ENCODE measurements at regions of chr5 and their contacts with region 1.

Region 1: GRCh38 chr5:139517683-139518564 is 35.4 kb upstream of the STING1 start:
- DNase-seq: peak; percentile 79 to 93 (median 86)
- H3K4me3 ChIP-seq: peak overlapping the region; percentile 65 to 84
- H3K4me3 Mint-ChIP-seq: peak overlapping the region; percentile 76 to 96 (median 90)
- H3K27ac ChIP-seq: peak overlapping the region; percentile 78
- H3K27ac Mint-ChIP-seq: peak overlapping the region; percentile 80 to 99 (median 98)
- H3K4me1 ChIP-seq: peaks cover 13% of the 10 kb centered on the region
- H3K4me1 Mint-ChIP-seq: peaks cover 16 to 32% (median 23%) of the 10 kb centered on the region in 4 donors
- H3K27me3 ChIP-seq: no peaks in the 10 kb centered on the region
- H3K27me3 Mint-ChIP-seq: peaks cover 1 to 4% of the 10 kb centered on the region in 2 donors

Region 2: GRCh38 chr5:137545956-137546355 is 1972.0 kb before region 1 on chr5:
- CTCF ChIA-PET with region 1: no interaction called
- POLR2A ChIA-PET with region 1: no interaction called
- intact Hi-C with region 1: no loop called
- DNase-seq: no peak
- H3K4me3 ChIP-seq: no peak overlapping the region
- H3K4me3 Mint-ChIP-seq: no peak overlapping the region
- H3K27ac ChIP-seq: no peak overlapping the region
- H3K27ac Mint-ChIP-seq: no peak overlapping the region
- H3K4me1 ChIP-seq: no peaks in the 10 kb centered on the region
- H3K4me1 Mint-ChIP-seq: no peaks in the 10 kb centered on the region
- H3K27me3 ChIP-seq: no peaks in the 10 kb centered on the region
- H3K27me3 Mint-ChIP-seq: peaks cover 21 to 26% of the 10 kb centered on the region in 2 donors

Region 3: DNA sequence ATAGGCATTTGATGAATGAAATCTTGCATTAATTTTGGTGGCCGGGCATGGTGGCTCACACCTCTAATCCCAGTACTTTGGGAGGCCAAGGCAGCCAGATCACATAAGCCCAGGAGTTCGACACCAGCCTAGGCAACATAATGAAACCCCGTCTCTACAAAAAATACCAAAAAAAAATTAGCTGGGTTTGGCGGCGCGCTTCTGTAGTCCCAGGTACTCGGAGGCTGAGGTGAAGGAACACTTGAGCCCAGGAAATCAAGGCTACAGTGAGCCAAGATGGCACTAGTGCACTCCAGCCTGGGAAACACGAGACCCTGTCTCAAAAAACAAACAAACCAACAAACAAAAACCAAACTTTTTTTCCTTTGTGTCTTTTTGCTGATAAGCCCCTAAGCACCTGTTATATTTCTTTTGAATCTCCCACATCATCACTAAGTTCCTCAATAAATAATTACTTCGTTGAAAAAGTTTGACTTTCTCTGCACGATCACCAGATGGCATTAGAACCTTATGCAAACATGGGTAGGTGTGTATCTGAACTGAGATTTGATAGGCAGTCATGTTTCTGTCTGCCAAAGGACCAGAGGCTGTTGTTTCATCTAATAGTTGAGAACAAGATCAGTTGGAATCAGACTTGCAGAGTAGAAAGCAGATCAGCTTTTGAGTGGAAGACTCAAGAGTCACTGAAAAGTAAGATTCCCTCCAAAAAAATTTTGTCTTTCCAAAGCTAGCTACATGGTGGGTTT is 229.9 kb before region 1 on chr5:
- CTCF ChIA-PET with region 1: interaction called, 3 read pairs
- POLR2A ChIA-PET with region 1: no interaction called
- intact Hi-C with region 1: loop called (anchors 5 kb)
- DNase-seq: no peak
- H3K4me3 ChIP-seq: no peak overlapping the region
- H3K4me3 Mint-ChIP-seq: no peak overlapping the region
- H3K27ac ChIP-seq: no peak overlapping the region
- H3K27ac Mint-ChIP-seq: peak overlapping the region in 1 of 7 donors; percentile 30
- H3K4me1 ChIP-seq: peaks cover 6% of the 10 kb centered on the region
- H3K4me1 Mint-ChIP-seq: peaks cover under 1 to 3% (median 3%) of the 10 kb centered on the region in 4 donors
- H3K27me3 ChIP-seq: no peaks in the 10 kb centered on the region
- H3K27me3 Mint-ChIP-seq: no peaks in the 10 kb centered on the region

Region 4: GRCh38 chr5:139430015-139430414 is 87.9 kb before region 1 on chr5:
- CTCF ChIA-PET with region 1: interaction called, 632 read pairs
- POLR2A ChIA-PET with region 1: interaction called, 103 read pairs
- intact Hi-C with region 1: no loop called
- DNase-seq: no peak
- H3K4me3 ChIP-seq: no peak overlapping the region
- H3K4me3 Mint-ChIP-seq: no peak overlapping the region
- H3K27ac ChIP-seq: no peak overlapping the region
- H3K27ac Mint-ChIP-seq: peak overlapping the region in 5 of 7 donors; percentile 23 to 55 (median 45)
- H3K4me1 ChIP-seq: peaks cover 9% of the 10 kb centered on the region
- H3K4me1 Mint-ChIP-seq: peaks cover 6 to 9% (median 8%) of the 10 kb centered on the region in 4 donors
- H3K27me3 ChIP-seq: no peaks in the 10 kb centered on the region
- H3K27me3 Mint-ChIP-seq: no peaks in the 10 kb centered on the region

Region 5: DNA sequence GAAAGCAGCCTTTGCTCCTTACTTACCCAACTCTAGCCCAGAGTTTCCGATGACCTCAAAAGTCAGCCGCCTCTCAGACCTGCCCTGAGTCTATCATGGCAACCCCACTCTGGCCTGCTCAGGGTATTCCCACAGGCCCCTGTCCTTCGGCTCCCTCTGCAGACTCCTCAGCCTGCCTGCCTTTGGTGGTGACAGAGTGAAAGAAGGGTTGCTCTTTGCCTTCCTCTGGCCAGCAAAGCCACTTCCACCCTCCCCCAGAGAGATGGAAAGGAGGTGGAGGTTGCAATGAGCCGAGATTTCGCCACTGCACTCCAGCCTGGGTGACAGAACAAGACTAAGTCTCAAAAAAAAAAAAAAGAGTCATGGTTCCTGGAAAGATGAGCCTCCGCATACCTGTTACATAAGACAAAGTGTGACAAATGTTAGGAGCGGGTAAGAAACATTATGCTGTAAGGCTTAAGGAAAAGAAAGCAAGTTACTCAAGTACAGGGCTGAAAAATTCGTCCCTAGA is 49.4 kb before region 1 on chr5:
- CTCF ChIA-PET with region 1: interaction called, 17 read pairs
- POLR2A ChIA-PET with region 1: interaction called, 5 read pairs
- intact Hi-C with region 1: no loop called
- DNase-seq: no peak
- H3K4me3 ChIP-seq: no peak overlapping the region
- H3K4me3 Mint-ChIP-seq: peak overlapping the region in 7 of 8 donors; percentile 38 to 84 (median 71)
- H3K27ac ChIP-seq: no peak overlapping the region
- H3K27ac Mint-ChIP-seq: peak overlapping the region; percentile 67 to 94 (median 85)
- H3K4me1 ChIP-seq: peaks cover 54% of the 10 kb centered on the region
- H3K4me1 Mint-ChIP-seq: peaks cover 32 to 55% (median 45%) of the 10 kb centered on the region in 4 donors
- H3K27me3 ChIP-seq: no peaks in the 10 kb centered on the region
- H3K27me3 Mint-ChIP-seq: no peaks in the 10 kb centered on the region

Region 6: DNA sequence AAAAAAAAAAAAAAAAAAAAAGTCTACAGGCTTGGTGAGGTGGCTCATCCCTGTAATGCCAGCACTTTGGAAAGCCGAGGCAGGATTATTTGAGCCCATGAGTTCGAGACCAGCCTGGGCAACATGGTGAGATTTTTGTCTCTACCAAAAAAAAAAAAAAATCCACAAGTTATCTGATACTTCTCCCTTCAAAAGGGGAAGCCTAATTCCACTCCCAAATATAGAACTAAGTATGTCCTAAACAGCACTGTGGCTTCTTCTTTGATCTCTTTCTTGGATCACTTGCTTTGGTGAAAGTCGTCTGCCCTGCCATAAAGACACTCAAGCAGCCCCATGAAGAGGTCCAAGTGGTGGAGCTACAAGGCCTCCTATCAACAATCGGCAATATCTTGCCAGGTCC is 16.5 kb before region 1 on chr5:
- CTCF ChIA-PET with region 1: interaction called, 35 read pairs
- POLR2A ChIA-PET with region 1: no interaction called
- intact Hi-C with region 1: no loop called
- DNase-seq: no peak
- H3K4me3 ChIP-seq: no peak overlapping the region
- H3K4me3 Mint-ChIP-seq: no peak overlapping the region
- H3K27ac ChIP-seq: no peak overlapping the region
- H3K27ac Mint-ChIP-seq: no peak overlapping the region
- H3K4me1 ChIP-seq: no peaks in the 10 kb centered on the region
- H3K4me1 Mint-ChIP-seq: no peaks in the 10 kb centered on the region
- H3K27me3 ChIP-seq: no peaks in the 10 kb centered on the region
- H3K27me3 Mint-ChIP-seq: no peaks in the 10 kb centered on the region

Region 7: GRCh38 chr5:139633295-139634027 is 115.5 kb after region 1 on chr5:
- CTCF ChIA-PET with region 1: interaction called, 6 read pairs
- POLR2A ChIA-PET with region 1: interaction called, 3 read pairs
- intact Hi-C with region 1: loop called (anchors 1 kb)
- DNase-seq: peak; percentile 52 to 66 (median 64)
- H3K4me3 ChIP-seq: no peak overlapping the region
- H3K4me3 Mint-ChIP-seq: peak overlapping the region in 1 of 8 donors; percentile 4
- H3K27ac ChIP-seq: no peak overlapping the region
- H3K27ac Mint-ChIP-seq: peak overlapping the region in 6 of 7 donors; percentile 1 to 84 (median 28)
- H3K4me1 ChIP-seq: peaks cover 24% of the 10 kb centered on the region
- H3K4me1 Mint-ChIP-seq: peaks cover 22 to 42% (median 34%) of the 10 kb centered on the region in 4 donors
- H3K27me3 ChIP-seq: no peaks in the 10 kb centered on the region
- H3K27me3 Mint-ChIP-seq: no peaks in the 10 kb centered on the region

Region 8: DNA sequence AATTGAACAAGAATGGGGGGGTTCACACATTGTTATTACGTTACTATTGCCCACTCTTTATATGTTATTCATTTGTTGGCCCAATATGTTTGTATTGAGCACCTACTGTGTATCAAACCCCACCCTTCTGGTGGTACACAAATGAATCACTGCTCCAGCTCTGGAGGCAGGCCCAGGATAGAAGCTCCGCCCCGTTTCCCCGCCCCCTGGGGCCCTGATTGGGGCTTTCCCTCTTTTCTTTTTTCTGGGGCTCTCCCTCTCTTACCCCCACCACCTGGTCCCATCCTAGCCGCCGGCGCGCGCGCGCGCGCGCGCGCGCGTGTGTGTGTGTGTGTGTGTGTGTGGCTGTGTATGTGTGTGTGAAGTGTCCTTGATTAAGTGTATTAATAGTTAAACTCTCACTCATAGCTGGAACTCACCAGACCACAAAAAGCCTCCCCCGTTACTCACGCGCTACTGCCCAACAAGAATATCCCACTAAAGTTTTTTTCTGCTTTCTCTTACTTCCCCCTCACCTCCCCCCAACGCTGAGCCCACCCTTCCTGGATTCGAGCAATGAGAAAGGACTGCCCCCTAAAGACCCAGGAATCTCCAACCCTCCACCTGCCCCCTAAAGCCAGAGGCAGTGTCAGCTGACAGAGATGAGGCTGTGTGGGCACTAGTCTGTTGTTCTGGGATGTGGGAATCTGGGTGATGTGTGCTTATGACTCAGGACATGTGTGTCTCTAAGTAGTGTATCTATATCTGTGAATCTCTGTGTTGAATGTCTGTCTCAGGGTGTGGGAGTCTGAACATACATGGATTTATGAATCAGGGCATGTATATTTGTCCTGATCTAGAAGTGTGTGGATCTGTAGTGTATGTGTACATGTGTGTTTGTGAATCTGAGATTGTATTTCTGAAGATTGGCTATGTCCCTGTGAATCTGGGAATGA is 134.2 kb after region 1 on chr5:
- CTCF ChIA-PET with region 1: no interaction called
- POLR2A ChIA-PET with region 1: no interaction called
- intact Hi-C with region 1: no loop called
- DNase-seq: peak in 2 of 5 donors; percentile 41 to 70
- H3K4me3 ChIP-seq: no peak overlapping the region
- H3K4me3 Mint-ChIP-seq: peak overlapping the region in 2 of 8 donors; percentile 0 to 3
- H3K27ac ChIP-seq: no peak overlapping the region
- H3K27ac Mint-ChIP-seq: peak overlapping the region in 3 of 7 donors; percentile 1 to 22 (median 2)
- H3K4me1 ChIP-seq: peaks cover 36% of the 10 kb centered on the region
- H3K4me1 Mint-ChIP-seq: peaks cover 10 to 43% (median 19%) of the 10 kb centered on the region in 4 donors
- H3K27me3 ChIP-seq: peaks cover 37% of the 10 kb centered on the region
- H3K27me3 Mint-ChIP-seq: peaks cover 30 to 43% of the 10 kb centered on the region in 2 donors

Measured in CD4-positive, alpha-beta memory T cell (primary cell).